Aorta (tissue), 5 donors: ENCODE measurements at regions of chr22 and their contacts with region 1.

Region 1: DNA sequence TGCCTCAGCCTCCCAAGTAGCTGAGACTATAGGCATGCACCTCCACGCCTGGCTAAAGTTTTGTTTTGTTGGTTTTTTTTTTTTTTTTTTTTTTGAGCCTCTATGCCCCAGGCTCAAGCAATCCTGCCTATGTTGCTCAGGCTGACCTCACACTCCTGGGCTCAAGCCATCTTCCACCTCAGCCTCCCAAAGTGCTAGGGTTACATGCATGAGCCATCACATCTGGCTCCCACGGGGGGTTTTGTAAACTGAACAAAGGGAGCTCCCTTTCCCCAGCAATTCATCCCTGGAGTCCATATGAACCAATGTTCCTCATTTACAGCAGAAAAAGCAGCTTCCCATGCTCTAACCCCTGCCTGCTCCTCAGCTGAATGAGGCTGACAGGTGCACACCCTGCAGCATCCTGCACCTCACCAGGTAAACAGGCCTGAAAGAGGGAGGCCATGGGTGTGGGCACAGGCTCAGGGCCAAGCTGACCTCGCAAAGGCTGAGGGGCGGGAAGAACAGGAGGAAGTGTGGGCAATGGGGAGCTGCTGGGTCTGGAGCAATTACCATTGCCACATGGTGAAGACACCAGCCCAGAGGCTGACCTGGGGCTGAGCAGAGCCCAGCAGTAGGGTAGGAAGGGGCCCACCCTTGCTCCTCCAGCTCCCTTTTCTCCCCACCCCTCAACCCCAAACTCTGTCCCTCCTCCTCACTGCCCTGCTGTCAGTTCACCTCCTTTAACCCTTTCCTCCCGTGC is 58.2 kb downstream of the RBX1 start:
- DNase-seq: no peak
- ATAC-seq: no peak
- H3K4me3 ChIP-seq: no peak overlapping the region
- H3K27ac ChIP-seq: no peak overlapping the region
- H3K4me1 ChIP-seq: no peaks in the 10 kb centered on the region
- H3K27me3 ChIP-seq: no peaks in the 10 kb centered on the region

Region 2: DNA sequence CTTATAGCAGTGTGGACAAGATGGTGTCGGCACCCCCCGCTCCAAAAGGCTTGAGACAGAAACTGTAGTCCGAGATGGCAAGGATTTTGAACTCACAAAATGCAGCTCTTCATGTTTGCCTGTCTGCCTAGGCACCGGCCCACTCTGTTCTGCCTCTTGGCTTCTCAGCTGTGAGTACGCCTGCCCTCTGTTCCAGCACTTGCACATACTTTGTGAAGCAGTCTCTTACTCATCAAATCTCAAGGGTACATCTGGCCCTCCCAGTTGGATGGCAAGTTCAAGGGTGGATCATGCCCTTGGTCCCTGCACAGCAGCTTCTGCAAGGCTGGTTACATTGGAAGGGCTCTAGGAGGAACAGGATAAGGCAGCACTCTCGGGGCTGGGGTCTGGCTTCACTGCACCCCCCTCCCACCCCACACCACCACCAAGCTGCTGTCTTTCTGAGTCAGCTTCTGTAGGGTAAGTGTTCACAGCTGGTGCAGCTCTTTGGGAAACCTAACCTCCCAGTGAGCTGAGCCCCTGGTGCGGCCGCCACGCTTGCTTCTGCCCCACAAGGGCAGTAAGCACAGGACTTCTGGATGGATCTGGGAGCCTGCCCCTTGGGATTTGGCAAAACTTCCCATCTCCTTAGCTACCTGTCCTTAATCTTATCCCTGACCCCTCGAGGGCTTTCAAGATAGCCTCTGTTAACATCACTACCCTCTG is 977.5 kb before region 1 on chr22:
- intact Hi-C with region 1: loop called in 1 of 2 experiments (anchors 5 kb)
- DNase-seq: peak in 1 of 2 donors; percentile 76
- ATAC-seq: no peak
- H3K4me3 ChIP-seq: no peak overlapping the region
- H3K27ac ChIP-seq: no peak overlapping the region
- H3K4me1 ChIP-seq: no peaks in the 10 kb centered on the region
- H3K27me3 ChIP-seq: no peaks in the 10 kb centered on the region

Region 3: DNA sequence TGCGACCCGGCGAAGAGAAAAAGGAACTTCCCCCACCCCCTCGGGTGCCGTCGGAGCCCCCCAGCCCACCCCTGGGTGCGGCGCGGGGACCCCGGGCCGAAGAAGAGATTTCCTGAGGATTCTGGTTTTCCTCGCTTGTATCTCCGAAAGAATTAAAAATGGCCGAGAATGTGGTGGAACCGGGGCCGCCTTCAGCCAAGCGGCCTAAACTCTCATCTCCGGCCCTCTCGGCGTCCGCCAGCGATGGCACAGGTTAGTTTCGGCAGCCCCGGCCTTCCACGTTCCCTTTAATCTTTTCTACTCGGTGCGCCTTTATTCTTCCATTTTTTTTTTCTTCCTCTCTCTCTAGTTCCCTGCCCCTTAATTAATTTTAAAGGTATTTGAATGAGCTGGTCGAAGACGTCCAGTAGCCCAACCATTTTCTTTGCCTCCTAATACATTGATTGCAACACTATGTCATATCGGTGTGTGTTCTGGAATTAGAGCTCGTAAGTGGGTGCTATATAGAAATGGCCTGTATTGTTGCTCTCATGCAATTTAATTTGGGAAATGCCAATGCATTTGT is 83.6 kb after region 1 on chr22:
- intact Hi-C with region 1: no loop called
- DNase-seq: peak; percentile 60 to 80
- ATAC-seq: no peak
- H3K4me3 ChIP-seq: peak overlapping the region; percentile 98 to 100
- H3K27ac ChIP-seq: peak overlapping the region; percentile 98 to 99
- H3K4me1 ChIP-seq: peaks cover 0 to 3% of the 10 kb centered on the region in 2 donors
- H3K27me3 ChIP-seq: no peaks in the 10 kb centered on the region

Region 4: DNA sequence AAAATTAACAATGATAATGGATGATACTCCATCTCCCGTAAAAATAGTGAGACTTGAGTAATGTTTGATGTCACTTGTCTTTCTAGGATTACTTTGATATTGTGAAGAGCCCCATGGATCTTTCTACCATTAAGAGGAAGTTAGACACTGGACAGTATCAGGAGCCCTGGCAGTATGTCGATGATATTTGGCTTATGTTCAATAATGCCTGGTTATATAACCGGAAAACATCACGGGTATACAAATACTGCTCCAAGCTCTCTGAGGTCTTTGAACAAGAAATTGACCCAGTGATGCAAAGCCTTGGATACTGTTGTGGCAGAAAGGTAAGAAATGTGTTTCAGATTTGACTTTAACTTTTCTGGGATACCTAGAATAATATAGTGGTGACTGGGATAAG is 147.7 kb after region 1 on chr22:
- intact Hi-C with region 1: no loop called
- DNase-seq: no peak
- ATAC-seq: no peak
- H3K4me3 ChIP-seq: no peak overlapping the region
- H3K27ac ChIP-seq: no peak overlapping the region
- H3K4me1 ChIP-seq: no peaks in the 10 kb centered on the region
- H3K27me3 ChIP-seq: no peaks in the 10 kb centered on the region